MCF 10A (cell line): ENCODE measurements at regions of chr17 and their contacts with region 1.

Region 1: DNA sequence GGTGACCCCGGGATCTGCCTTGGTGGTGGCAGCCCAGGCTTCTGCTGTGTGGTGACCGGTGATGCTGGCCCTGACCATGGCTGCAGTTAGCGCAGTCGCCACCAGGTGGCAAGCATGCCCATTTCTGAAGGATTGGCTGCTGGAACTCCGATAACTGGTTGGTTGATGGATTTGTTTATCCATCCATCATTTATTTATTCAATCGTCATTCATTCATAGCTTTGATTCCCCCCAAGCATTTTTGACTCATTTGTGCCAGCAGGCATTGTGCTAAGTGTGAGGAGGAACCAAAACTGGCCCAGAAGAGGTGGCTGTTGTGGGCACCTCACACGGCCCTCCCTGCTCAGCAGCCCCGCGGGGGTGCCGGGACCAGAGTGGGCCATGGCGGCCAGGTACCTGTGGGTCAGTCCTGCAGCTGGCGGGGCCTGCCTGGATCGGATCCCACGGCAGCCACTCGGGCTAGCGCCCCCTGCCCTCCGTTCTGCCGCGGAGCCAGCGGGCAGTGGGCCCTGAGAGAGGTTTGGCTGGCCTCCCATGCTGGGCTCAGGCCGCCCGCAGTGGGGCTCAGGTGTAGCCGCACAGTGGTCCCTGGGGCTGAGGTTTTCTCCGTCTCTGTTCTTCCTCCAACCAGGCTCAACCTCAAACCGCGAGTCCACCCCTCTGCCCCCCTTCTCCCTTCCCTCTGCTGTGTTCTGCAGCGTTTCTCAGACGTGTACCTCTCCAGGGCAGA is 28.8 kb upstream of the ITGA3 start:
- DNase-seq: peak; percentile 89
- H3K4me3 Mint-ChIP-seq: peak overlapping the region; percentile 82
- H3K27ac Mint-ChIP-seq: peak overlapping the region; percentile 84
- H3K4me1 Mint-ChIP-seq: peaks cover 22% of the 10 kb centered on the region
- H3K27me3 Mint-ChIP-seq: no peaks in the 10 kb centered on the region
- CTCF ChIP-seq: peak; percentile 91

Region 2: DNA sequence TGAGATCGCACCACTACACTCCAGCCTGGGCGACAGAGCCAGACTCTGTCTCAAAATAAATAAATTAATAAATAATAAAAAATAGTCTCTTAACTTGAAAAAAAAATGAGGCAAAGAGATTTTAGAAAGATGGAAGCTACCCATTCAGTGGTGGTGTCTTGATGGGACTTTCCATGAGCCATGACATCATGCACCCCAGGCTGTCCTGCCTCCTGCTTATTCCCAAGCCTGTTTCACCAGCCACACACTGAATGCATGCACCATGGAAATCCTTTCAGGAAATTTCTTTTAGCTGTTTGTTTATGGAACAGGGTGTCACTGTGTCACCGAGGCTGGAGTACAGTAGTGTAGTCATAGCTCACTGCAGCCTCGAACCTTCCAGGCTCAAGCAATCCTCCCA is 23.2 kb before region 1 on chr17:
- CTCF ChIA-PET with region 1: no interaction called
- POLR2A ChIA-PET with region 1: no interaction called
- intact Hi-C with region 1: no loop called
- DNase-seq: no peak
- H3K4me3 Mint-ChIP-seq: no peak overlapping the region
- H3K27ac Mint-ChIP-seq: no peak overlapping the region
- H3K4me1 Mint-ChIP-seq: no peaks in the 10 kb centered on the region
- H3K27me3 Mint-ChIP-seq: peaks cover 50% of the 10 kb centered on the region
- CTCF ChIP-seq: no peak

Region 3: DNA sequence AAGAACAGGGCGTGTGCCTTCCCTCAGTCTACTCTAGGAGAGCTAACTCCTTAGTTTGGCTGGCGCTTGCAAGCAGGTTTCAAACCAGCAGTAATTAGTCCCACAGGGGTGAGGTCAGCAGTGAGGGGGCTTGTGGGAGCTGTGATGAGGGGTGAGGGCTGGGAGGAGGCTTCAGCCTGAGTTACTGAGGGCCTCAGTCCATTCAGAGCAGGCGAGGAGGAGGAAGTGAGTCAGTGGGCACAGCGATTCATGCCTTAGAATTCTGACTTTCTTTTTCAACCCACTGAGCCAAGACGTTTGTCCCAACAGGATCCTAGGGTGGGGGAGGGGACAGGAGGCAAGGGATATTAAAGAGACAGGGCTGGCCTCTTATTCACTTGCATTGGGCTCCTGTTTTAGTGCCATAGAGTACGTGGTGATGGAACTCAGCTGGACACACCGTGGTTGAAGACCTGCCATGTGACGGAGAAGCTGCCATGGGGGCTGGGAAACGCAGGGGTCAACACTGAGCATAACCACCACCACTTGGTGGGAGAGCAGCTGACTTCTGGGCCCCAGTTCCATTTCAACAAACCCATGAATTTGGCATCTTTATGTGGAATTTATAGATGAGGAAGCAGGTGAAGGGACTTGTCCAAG is 20.5 kb after region 1 on chr17:
- CTCF ChIA-PET with region 1: interaction called, 72 read pairs
- POLR2A ChIA-PET with region 1: interaction called, 329 read pairs
- intact Hi-C with region 1: no loop called
- DNase-seq: peak; percentile 97
- H3K4me3 Mint-ChIP-seq: peak overlapping the region; percentile 32
- H3K27ac Mint-ChIP-seq: peak overlapping the region; percentile 88
- H3K4me1 Mint-ChIP-seq: peaks cover 83% of the 10 kb centered on the region
- H3K27me3 Mint-ChIP-seq: no peaks in the 10 kb centered on the region
- CTCF ChIP-seq: no peak

Region 4: GRCh38 chr17:50055426-50056230 is 28.6 kb after region 1 on chr17 and contains the start of gene ITGA3:
- CTCF ChIA-PET with region 1: interaction called, 72 read pairs
- POLR2A ChIA-PET with region 1: interaction called, 329 read pairs
- intact Hi-C with region 1: loop called (anchors 1 kb)
- DNase-seq: peak; percentile 98
- H3K4me3 Mint-ChIP-seq: peak within 1 kb of the TSS; percentile 80
- H3K27ac Mint-ChIP-seq: peak within 1 kb of the TSS; percentile 95
- H3K4me1 Mint-ChIP-seq: peaks cover 64% of the 10 kb centered on the region
- H3K27me3 Mint-ChIP-seq: no peaks in the 10 kb centered on the region
- CTCF ChIP-seq: no peak
- total RNA-seq, gene ITGA3: 588 and 717 TPM in 2 replicates